Pancreas (tissue), 10 donors: ENCODE measurements at regions of chr6 and their contacts with region 1.

Region 1: GRCh38 chr6:83514866-83515466 is 2.6 kb downstream of the PRSS35 start:
- DNase-seq: peak in 2 of 6 donors; percentile 15 to 49
- ATAC-seq: peak in 3 of 4 donors; percentile 66 to 68 (median 68)
- H3K4me3 ChIP-seq: no peak overlapping the region
- H3K27ac ChIP-seq: no peak overlapping the region
- H3K4me1 ChIP-seq: no peaks in the 10 kb centered on the region
- H3K27me3 ChIP-seq: no peaks in the 10 kb centered on the region
- CTCF ChIP-seq: peak; percentile 47 to 74 (median 66)

Region 2: GRCh38 chr6:83067448-83068413 is 447.2 kb before region 1 on chr6 and contains the start of gene DOP1A:
- intact Hi-C with region 1: loop called in 1 of 3 experiments (anchors 10 kb)
- DNase-seq: peak; percentile 95 to 98 (median 97)
- ATAC-seq: peak; percentile 89 to 94 (median 94)
- H3K4me3 ChIP-seq: peak within 1 kb of the TSS; percentile 63 to 85 (median 74)
- H3K27ac ChIP-seq: peak within 1 kb of the TSS; percentile 77 to 92 (median 88)
- H3K4me1 ChIP-seq: peaks cover 10 to 50% (median 42%) of the 10 kb centered on the region in 3 donors
- H3K27me3 ChIP-seq: no peaks in the 10 kb centered on the region
- CTCF ChIP-seq: peak; percentile 92 to 99 (median 96)
- total RNA-seq, gene DOP1A: 8.3 to 16.1 (median 10.5) TPM

Region 3: DNA sequence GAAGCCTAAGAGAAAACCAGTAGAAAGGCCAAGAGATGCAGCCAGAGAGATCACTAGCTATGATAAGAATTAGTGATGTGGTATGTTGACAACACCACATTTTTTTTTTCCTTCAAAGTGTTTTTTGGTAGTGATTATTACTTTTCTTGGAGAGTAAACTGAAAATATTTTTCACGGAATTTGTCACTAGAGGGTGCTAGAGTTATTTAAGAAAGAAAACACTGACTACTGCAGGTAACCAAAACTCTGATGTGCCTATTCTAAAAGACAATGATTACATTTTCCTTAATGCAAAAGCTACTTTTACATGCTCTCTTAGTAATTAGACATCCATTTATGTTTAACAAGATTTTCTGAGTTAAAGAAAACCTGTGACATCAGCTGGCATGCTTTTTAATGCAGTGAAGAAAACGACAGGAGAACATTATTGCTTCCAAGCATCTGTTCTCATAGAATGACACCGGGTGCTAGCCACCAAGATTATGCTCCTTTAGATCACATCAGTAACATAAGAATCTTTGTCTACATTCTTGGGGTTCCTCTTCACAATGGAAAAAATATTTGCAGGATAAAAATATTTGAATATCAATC is 293.0 kb before region 1 on chr6:
- intact Hi-C with region 1: loop called (anchors 5 to 10 kb)
- DNase-seq: no peak
- ATAC-seq: peak in 3 of 4 donors; percentile 52 to 65 (median 52)
- H3K4me3 ChIP-seq: no peak overlapping the region
- H3K27ac ChIP-seq: no peak overlapping the region
- H3K4me1 ChIP-seq: no peaks in the 10 kb centered on the region
- H3K27me3 ChIP-seq: no peaks in the 10 kb centered on the region
- CTCF ChIP-seq: peak in 3 of 4 donors; percentile 36 to 40 (median 39)

Region 4: DNA sequence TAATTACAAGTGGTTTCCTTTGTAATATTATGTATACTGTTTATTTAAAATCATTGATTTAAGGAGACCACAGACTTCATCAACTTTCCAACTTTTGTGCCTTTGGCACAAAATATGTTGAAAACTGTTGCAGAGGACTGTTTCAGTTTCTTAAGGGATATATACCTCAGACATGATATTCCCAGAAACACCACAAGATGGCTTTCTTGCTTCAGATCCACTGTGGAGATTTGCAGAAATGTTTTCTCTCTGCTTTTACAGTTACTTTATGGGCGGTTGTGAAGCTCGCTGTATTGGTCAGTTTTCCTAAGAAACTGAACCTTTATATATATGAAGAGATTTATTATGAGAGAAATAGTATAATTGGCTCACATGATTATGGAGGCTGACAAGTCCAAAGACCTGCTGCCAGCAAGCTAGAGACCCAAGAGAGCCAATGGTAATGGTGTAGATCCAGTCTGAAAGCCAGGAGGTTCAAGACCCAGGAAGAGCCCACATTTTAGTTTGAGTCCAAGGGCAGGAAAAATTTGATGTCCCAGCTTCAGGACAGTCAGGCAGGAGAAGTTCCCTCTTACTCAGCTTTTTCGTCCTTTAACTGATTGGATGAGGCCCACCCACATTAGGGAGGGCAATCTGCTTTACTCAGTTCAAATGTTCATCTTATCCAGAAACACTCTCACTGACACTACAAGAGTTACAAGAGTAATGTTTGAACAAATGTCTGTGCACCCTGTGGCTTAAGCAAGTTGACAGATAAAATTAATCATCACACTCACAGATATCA is 96.9 kb before region 1 on chr6:
- intact Hi-C with region 1: loop called (anchors 5 kb)
- DNase-seq: no peak
- ATAC-seq: peak; percentile 70 to 84 (median 82)
- H3K4me3 ChIP-seq: no peak overlapping the region
- H3K27ac ChIP-seq: no peak overlapping the region
- H3K4me1 ChIP-seq: peaks cover 0 to 4% (median 0%) of the 10 kb centered on the region in 3 donors
- H3K27me3 ChIP-seq: no peaks in the 10 kb centered on the region
- CTCF ChIP-seq: peak in 3 of 4 donors; percentile 20 to 44 (median 41)

Region 5: DNA sequence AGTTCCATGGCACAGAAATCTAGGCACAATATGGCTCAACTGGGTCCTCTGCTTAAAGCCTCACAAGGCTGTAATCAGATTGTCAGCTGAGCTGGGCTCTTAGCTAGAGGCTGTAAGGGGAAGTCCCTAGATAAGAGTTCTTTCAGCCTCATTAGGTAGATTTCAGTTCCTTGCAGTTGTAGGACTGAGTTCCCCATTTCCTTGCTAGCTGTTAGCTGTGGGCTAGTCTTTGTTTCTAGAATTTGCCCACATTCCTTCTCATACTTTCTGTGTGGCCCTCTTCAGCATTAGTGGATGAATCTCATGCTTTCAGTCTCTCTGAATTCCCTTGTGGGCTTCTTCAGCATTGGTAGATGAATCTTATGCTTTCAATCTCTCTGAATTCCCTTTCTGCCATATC is 447.6 kb after region 1 on chr6:
- intact Hi-C with region 1: no loop called
- DNase-seq: no peak
- ATAC-seq: no peak
- H3K4me3 ChIP-seq: no peak overlapping the region
- H3K27ac ChIP-seq: no peak overlapping the region
- H3K4me1 ChIP-seq: no peaks in the 10 kb centered on the region
- H3K27me3 ChIP-seq: no peaks in the 10 kb centered on the region
- CTCF ChIP-seq: no peak